Naive thymus-derived CD8-positive, alpha-beta T cell (primary cell): ENCODE measurements at regions of chr17 and their contacts with region 1.

Region 1: DNA sequence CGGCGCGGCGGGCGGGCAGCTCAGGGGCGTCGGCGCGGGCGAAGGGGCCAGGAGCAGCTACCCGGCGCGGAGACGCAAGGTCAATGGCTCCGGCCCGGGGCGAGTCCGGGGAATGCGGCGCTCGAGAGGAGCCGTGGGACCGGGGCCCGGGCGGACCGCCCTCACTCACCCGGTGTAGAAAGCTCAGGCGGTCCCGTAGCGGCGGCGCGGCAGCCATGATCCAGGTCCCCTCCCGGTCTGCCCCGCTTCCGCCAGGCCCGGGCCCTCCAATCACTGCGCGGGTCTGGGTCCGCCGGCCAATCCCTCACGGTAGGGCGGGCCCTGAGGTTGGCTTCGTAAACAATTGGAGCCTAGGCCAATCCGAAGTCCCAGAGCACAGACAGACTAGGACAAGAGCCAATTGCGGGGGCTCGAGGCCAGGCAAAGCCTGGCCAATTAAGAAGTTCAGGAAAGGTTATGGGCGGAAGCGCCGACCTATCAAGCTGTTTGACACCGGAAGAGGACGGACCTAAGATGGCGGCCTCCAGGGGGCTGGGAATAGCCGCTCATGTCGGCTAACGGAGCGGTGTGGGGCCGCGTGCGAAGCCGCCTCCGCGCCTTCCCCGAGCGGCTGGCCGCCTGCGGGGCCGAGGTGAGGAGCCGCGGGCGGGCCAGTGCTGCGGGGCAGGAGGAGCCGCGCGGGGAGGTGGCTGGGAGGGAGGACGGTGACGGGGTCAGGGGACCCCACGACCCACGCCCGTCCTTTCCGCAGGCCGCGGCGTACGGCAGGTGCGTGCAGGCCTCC is at the starts of genes NDUFAF8 and TEPSIN:
- DNase-seq: peak; percentile 90 to 98 (median 96)
- ATAC-seq: peak; percentile 96
- H3K4me3 Mint-ChIP-seq: peak within 1 kb of the TSS; percentile 88 to 95 (median 93)
- H3K27ac Mint-ChIP-seq: peak within 1 kb of the TSS; percentile 68 to 95 (median 89)
- H3K4me1 Mint-ChIP-seq: peaks cover 13 to 56% (median 46%) of the 10 kb centered on the region in 4 donors
- H3K27me3 Mint-ChIP-seq: no peaks in the 10 kb centered on the region
- polyA plus RNA-seq, gene NDUFAF8: 85.2 to 135 (median 107) TPM
- polyA plus RNA-seq, gene TEPSIN: 2.7 to 2.8 (median 2.8) TPM

Region 2: DNA sequence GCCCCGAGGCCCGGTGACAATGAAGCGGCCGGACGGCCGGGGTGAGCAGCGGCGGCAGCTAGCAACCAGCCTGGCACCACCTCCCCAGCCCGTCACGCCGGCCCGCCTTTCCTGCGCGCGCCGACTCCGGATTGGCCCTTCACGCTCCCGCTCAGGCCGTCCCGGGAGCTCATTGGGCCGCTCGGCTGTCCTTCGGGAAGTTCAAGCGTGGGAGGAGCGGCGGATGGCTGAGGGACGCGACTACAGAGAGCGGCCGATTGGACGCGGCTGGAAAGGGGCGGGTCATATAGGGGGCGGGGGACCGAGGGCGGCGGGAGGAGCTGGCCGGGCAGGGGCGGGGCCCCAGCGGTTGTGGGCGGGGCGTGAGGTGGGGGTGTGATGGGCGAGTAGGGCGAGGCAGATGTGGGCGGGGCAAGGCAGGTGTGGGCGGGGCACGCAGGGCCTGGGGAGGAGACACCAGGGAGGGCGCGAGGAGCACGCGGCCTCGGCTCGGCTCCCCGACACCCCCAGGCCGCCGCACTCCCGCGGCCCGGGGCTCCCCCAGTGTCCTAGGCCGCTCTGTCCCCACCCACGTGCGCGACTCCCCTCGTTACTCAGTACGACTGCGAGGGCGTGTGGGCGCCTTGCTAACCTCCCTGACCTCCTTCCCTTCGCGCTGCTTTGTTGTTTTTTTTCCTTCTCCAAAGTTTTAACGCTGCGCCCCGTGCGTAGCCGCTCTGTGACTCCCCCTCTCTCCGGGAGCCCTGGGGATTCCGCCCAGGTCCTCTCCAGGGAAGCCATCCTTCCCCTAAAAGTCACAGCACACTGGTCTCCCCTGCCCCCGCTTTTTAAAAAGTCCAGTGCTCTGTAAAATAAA is 15.9 kb before region 1 on chr17 and contains the start of gene CEP131:
- POLR2A ChIA-PET with region 1: interaction called, 43 read pairs
- DNase-seq: peak; percentile 98 to 100 (median 98)
- ATAC-seq: peak; percentile 97 to 98
- H3K4me3 Mint-ChIP-seq: peak within 1 kb of the TSS; percentile 75 to 92 (median 83)
- H3K27ac Mint-ChIP-seq: peak within 1 kb of the TSS in 9 of 10 donors; percentile 16 to 91 (median 77)
- H3K4me1 Mint-ChIP-seq: peaks cover 11 to 24% (median 19%) of the 10 kb centered on the region in 4 donors
- H3K27me3 Mint-ChIP-seq: no peaks in the 10 kb centered on the region
- polyA plus RNA-seq, gene CEP131: 1.1 to 4.4 (median 4.2) TPM

Region 3: DNA sequence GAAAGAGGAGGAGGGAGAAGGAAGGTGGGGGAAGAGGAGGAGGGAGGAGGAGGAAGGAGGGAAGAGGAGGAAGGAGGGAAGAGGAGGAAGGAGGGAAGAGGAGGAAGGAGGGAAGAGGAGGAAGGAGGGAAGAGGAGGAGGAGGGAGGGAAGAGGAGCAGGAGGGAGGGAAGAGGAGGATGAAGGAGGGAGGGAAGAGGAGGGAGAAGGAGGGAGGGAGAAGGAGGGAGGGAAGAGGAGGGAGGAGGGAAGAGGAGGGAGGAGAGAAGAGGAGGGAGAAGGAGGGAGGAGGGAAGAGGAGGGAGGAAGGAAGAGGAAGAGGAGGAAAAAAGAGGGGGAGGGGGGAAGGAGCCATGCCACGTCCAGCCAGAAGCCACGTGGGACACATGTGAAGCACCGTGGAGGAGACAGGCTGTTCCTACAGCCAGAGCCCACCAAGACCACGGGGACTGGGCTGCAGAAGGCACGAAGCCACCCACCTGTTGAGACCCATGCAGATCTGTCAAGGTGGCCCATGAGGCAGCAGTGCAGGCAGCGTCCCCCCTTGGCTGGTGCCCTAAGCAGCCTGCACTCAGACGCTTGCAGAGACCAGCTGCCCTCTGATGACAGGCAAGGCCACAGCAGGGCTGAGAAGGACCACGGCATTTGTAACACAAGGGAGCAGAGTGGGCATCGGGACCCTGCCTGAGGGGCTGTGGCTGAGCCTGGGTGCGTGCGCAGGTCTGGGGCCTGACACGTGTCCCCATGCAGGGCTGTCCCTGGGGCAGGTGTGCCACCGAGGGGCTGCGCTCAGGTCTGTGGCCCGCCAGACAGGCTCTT is 10.4 kb after region 1 on chr17:
- POLR2A ChIA-PET with region 1: interaction called, 10 read pairs
- DNase-seq: no peak
- ATAC-seq: no peak
- H3K4me3 Mint-ChIP-seq: peak overlapping the region in 2 of 10 donors; percentile 30 to 34
- H3K27ac Mint-ChIP-seq: peak overlapping the region in 1 of 10 donors; percentile 51
- H3K4me1 Mint-ChIP-seq: peaks cover 9 to 22% (median 17%) of the 10 kb centered on the region in 4 donors
- H3K27me3 Mint-ChIP-seq: no peaks in the 10 kb centered on the region